ENCODE measurements at regions of chr2 and their contacts with region 1.

Region 1: GRCh38 chr2:230798769-230799399 is 65.9 kb upstream of the ITM2C start:
- DNase-seq: no peak
- ATAC-seq: peak; percentile 94
- H3K4me3 ChIP-seq: no peak overlapping the region
- H3K27ac ChIP-seq: no peak overlapping the region
- H3K4me1 ChIP-seq: peaks cover 14% of the 10 kb centered on the region
- H3K27me3 ChIP-seq: no peaks in the 10 kb centered on the region
- CTCF ChIP-seq: peak; percentile 57 to 71 (median 68)
- EP300 ChIP-seq: no peak
- POLR2A ChIP-seq: no peak
- RAD21 ChIP-seq: peak; percentile 96

Region 2: GRCh38 chr2:230007931-230008707 is 790.8 kb before region 1 on chr2:
- CTCF ChIA-PET with region 1: interaction called, 14 read pairs
- POLR2A ChIA-PET with region 1: no interaction called
- RAD21 ChIA-PET with region 1: interaction called, 7 read pairs
- SMC1A ChIA-PET with region 1: interaction called, 10 read pairs
- in situ Hi-C with region 1: loop called (anchors 10 kb)
- intact Hi-C with region 1: loop called (anchors 10 kb)
- DNase-seq: peak; percentile 26
- ATAC-seq: peak; percentile 88
- H3K4me3 ChIP-seq: no peak overlapping the region
- H3K27ac ChIP-seq: no peak overlapping the region
- H3K4me1 ChIP-seq: no peaks in the 10 kb centered on the region
- H3K27me3 ChIP-seq: no peaks in the 10 kb centered on the region
- CTCF ChIP-seq: peak; percentile 80 to 84 (median 80)
- EP300 ChIP-seq: no peak
- POLR2A ChIP-seq: no peak
- RAD21 ChIP-seq: peak; percentile 98

Region 3: DNA sequence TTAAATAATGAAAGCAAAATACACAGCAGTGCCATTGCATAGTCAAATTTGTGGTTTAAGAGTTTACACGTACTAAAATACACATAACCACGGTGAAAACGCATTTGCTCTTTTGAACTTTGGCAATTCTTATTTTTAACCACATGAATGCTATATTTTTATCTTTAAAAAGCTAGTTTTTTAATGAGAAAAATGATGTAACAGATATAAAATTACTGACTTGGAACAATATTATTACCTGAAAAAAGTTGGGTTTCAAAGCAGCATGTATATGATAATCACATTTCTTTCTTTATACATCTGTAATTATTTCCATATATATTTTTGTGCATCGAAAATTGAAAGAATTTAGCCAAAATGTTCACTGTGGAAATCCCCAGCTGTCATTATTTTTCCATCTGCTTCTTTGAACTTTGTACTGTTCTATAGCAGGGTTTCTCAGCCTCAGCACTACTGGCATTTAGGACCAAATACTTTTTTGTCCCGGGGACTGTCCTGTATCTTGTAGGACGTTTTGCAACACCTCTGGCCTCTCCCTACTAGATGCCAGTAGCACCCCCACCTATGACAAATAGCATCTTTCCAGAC is 162.1 kb before region 1 on chr2:
- CTCF ChIA-PET with region 1: interaction called, 19 read pairs
- POLR2A ChIA-PET with region 1: interaction called, 6 read pairs
- RAD21 ChIA-PET with region 1: interaction called, 7 read pairs
- SMC1A ChIA-PET with region 1: interaction called, 8 read pairs
- in situ Hi-C with region 1: no loop called
- intact Hi-C with region 1: loop called (anchors 5 kb)
- DNase-seq: no peak
- ATAC-seq: peak; percentile 70
- H3K4me3 ChIP-seq: no peak overlapping the region
- H3K27ac ChIP-seq: peak overlapping the region; percentile 54
- H3K4me1 ChIP-seq: peaks cover 14% of the 10 kb centered on the region
- H3K27me3 ChIP-seq: no peaks in the 10 kb centered on the region
- CTCF ChIP-seq: no peak
- EP300 ChIP-seq: peak in 1 of 2 experiments; percentile 73; a peak in 2 of 4 replicates
- POLR2A ChIP-seq: no peak
- RAD21 ChIP-seq: no peak

Region 4: GRCh38 chr2:230668184-230668938 is 130.5 kb before region 1 on chr2:
- CTCF ChIA-PET with region 1: interaction called, 8 read pairs
- POLR2A ChIA-PET with region 1: interaction called, 9 read pairs
- RAD21 ChIA-PET with region 1: interaction called, 11 read pairs
- SMC1A ChIA-PET with region 1: interaction called, 23 read pairs
- in situ Hi-C with region 1: no loop called
- intact Hi-C with region 1: no loop called
- DNase-seq: peak; percentile 88
- ATAC-seq: peak; percentile 70
- H3K4me3 ChIP-seq: no peak overlapping the region
- H3K27ac ChIP-seq: peak overlapping the region; percentile 92
- H3K4me1 ChIP-seq: peaks cover 73% of the 10 kb centered on the region
- H3K27me3 ChIP-seq: no peaks in the 10 kb centered on the region
- CTCF ChIP-seq: no peak
- EP300 ChIP-seq: peak; percentile 90 to 92
- POLR2A ChIP-seq: peak; percentile 41
- RAD21 ChIP-seq: peak; percentile 10; the same call in 1 of the 2 replicates

Region 5: DNA sequence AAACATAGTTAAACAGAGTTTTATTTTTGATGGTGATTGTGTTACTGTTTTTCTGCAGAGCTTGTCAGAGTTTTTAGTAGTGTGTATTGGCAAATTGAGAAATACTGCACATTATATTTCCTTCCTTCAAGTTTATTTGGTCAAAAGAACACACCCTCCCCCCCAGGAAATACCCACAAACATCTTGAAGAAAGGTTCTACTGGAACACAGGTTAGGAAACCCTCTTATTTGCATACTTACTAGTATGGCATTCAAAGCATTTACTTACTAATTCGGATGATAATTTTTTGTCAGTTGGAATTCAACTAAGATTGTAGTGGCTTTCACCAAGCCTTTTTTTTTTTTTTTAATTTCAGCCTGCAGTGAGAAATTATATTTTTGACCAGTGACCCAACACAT is 77.2 kb before region 1 on chr2:
- CTCF ChIA-PET with region 1: interaction called, 5 read pairs
- POLR2A ChIA-PET with region 1: no interaction called
- RAD21 ChIA-PET with region 1: interaction called, 13 read pairs
- SMC1A ChIA-PET with region 1: interaction called, 5 read pairs
- in situ Hi-C with region 1: no loop called
- intact Hi-C with region 1: no loop called
- DNase-seq: no peak
- ATAC-seq: peak; percentile 55
- H3K4me3 ChIP-seq: peak overlapping the region; percentile 45; the same call in 1 of the 2 replicates
- H3K27ac ChIP-seq: peak overlapping the region; percentile 65
- H3K4me1 ChIP-seq: peaks cover 34% of the 10 kb centered on the region
- H3K27me3 ChIP-seq: no peaks in the 10 kb centered on the region
- CTCF ChIP-seq: no peak
- EP300 ChIP-seq: no peak
- POLR2A ChIP-seq: no peak
- RAD21 ChIP-seq: no peak

Region 6: DNA sequence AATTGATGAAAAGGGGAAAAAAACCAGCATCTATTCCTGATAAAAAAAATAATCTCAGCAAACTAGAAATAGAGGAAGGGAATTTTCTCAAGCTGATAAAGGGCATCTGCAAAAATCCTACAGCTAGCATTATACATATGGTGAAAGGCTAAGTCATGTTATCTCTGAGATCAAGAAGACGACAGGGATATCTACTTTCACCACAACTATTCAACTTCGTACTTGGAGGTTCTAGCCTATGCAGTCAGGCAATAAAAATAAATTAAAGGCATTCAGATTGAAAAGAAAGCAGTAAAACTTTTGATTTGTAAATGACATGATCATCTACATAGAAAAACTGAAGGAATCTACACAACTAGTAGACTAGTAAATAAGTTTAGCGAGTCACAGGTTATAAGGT is 28.1 kb before region 1 on chr2:
- CTCF ChIA-PET with region 1: interaction called, 12 read pairs
- POLR2A ChIA-PET with region 1: interaction called, 8 read pairs
- RAD21 ChIA-PET with region 1: interaction called, 16 read pairs
- SMC1A ChIA-PET with region 1: interaction called, 5 read pairs
- in situ Hi-C with region 1: no loop called
- intact Hi-C with region 1: no loop called
- DNase-seq: no peak
- ATAC-seq: no peak
- H3K4me3 ChIP-seq: no peak overlapping the region
- H3K27ac ChIP-seq: no peak overlapping the region
- H3K4me1 ChIP-seq: no peaks in the 10 kb centered on the region
- H3K27me3 ChIP-seq: no peaks in the 10 kb centered on the region
- CTCF ChIP-seq: no peak
- EP300 ChIP-seq: no peak
- POLR2A ChIP-seq: no peak
- RAD21 ChIP-seq: no peak

Region 7: DNA sequence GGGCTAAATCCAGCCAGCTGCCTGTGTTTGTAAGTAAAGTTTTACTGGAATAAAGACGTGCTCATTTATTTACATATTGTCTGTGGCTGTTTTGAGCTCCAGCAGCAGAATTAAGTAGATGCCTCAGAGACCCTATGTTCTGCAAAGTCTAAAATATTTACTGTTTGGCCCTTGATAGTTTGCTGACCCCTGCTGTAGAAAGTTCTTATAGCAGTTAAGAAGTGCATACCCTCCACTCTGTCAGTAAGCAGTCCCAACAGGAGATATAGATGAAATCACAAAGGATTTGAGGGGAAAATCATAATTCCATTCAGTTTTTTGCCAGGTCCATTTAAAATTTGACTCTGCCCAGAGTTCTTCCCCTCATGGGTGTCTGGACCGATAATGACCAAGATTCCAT is 15.7 kb after region 1 on chr2:
- CTCF ChIA-PET with region 1: interaction called, 29 read pairs
- POLR2A ChIA-PET with region 1: no interaction called
- RAD21 ChIA-PET with region 1: interaction called, 5 read pairs
- SMC1A ChIA-PET with region 1: interaction called, 3 read pairs
- in situ Hi-C with region 1: no loop called
- intact Hi-C with region 1: no loop called
- DNase-seq: no peak
- ATAC-seq: peak; percentile 77
- H3K4me3 ChIP-seq: no peak overlapping the region
- H3K27ac ChIP-seq: no peak overlapping the region
- H3K4me1 ChIP-seq: no peaks in the 10 kb centered on the region
- H3K27me3 ChIP-seq: no peaks in the 10 kb centered on the region
- CTCF ChIP-seq: peak; percentile 38 to 50 (median 45); a peak in 4 of 6 replicates
- EP300 ChIP-seq: no peak
- POLR2A ChIP-seq: no peak
- RAD21 ChIP-seq: peak; percentile 72

Measured in GM12878 (cell line).